Activated CD8-positive, alpha-beta T cell treated with anti-CD3 and anti-CD28 coated beads for 36 hours (primary cell): ENCODE measurements at regions of chr6 and their contacts with region 1.

Region 1: GRCh38 chr6:52419809-52420670 is at the start of gene EFHC1:
- DNase-seq: peak; percentile 99
- ATAC-seq: peak; percentile 94
- H3K4me3 Mint-ChIP-seq: no peak within 1 kb of the TSS
- H3K27ac Mint-ChIP-seq: no peak within 1 kb of the TSS
- H3K4me1 Mint-ChIP-seq: peaks cover 27% of the 10 kb centered on the region
- H3K27me3 Mint-ChIP-seq: no peaks in the 10 kb centered on the region
- CTCF ChIP-seq: no peak
- total RNA-seq, gene EFHC1: 1.9 to 2.1 TPM

Region 2: DNA sequence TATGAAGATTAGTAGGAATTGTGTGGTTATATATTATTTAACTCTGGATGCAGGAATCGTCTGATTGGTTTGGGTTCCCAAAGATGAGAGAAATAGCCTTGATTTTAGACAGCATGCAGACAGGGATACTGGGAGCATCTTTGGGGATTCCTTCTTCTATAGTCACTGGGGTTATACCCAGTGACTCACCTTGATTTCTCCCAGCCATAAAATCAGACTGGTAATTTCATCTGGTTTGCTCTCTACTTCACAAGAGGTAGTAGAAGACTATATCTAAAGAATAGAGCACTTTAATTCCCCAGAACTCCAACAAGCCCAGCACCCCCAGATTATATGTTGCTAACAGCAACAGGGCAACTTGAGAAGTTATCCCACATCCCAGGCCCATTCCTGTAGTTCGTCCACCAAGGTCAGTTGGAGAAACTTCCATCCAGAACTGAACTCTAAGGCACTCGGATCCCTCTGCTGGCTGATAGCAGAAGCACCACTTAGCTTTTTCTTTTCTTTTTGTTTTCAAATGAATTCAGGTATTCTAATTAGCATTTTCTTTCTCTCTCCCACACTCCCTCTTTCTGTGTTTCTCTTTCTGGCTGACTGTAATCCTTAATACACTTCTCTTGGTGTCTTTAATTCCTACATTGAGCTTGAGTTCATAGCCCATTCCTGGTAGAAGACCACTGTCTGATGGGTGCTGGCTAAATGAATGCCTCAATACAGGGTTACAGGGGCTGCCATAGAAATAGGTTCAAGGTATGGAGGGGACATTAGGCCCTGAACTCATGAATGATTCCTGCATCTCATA is 20.3 kb before region 1 on chr6:
- CTCF ChIA-PET with region 1: interaction called, 16 read pairs
- POLR2A ChIA-PET with region 1: interaction called, 4 read pairs
- intact Hi-C with region 1: no loop called
- DNase-seq: peak; percentile 57
- ATAC-seq: peak; percentile 51
- H3K4me3 Mint-ChIP-seq: no peak overlapping the region
- H3K27ac Mint-ChIP-seq: peak overlapping the region; percentile 78
- H3K4me1 Mint-ChIP-seq: peaks cover 65% of the 10 kb centered on the region
- H3K27me3 Mint-ChIP-seq: no peaks in the 10 kb centered on the region
- CTCF ChIP-seq: peak; percentile 91

Region 3: GRCh38 chr6:52557389-52558265 is 137.6 kb after region 1 on chr6:
- CTCF ChIA-PET with region 1: no interaction called
- POLR2A ChIA-PET with region 1: no interaction called
- intact Hi-C with region 1: no loop called
- DNase-seq: no peak
- ATAC-seq: no peak
- H3K4me3 Mint-ChIP-seq: no peak overlapping the region
- H3K27ac Mint-ChIP-seq: no peak overlapping the region
- H3K4me1 Mint-ChIP-seq: peaks cover 2% of the 10 kb centered on the region
- H3K27me3 Mint-ChIP-seq: no peaks in the 10 kb centered on the region
- CTCF ChIP-seq: no peak

Region 4: GRCh38 chr6:52577022-52577777 is 157.2 kb after region 1 on chr6 and contains the start of gene TRAM2:
- CTCF ChIA-PET with region 1: interaction called, 5 read pairs
- POLR2A ChIA-PET with region 1: interaction called, 6 read pairs
- intact Hi-C with region 1: loop called (anchors 5 kb)
- DNase-seq: peak; percentile 61
- ATAC-seq: peak; percentile 60
- H3K4me3 Mint-ChIP-seq: peak within 1 kb of the TSS; percentile 78
- H3K27ac Mint-ChIP-seq: peak within 1 kb of the TSS; percentile 73
- H3K4me1 Mint-ChIP-seq: peaks cover 31% of the 10 kb centered on the region
- H3K27me3 Mint-ChIP-seq: no peaks in the 10 kb centered on the region
- CTCF ChIP-seq: no peak
- total RNA-seq, gene TRAM2: 0.94 to 1.0 TPM

Region 5: GRCh38 chr6:52598123-52598823 is 178.2 kb after region 1 on chr6:
- CTCF ChIA-PET with region 1: interaction called, 19 read pairs
- POLR2A ChIA-PET with region 1: no interaction called
- intact Hi-C with region 1: loop called (anchors 5 kb)
- DNase-seq: peak; percentile 64
- ATAC-seq: peak; percentile 76
- H3K4me3 Mint-ChIP-seq: no peak overlapping the region
- H3K27ac Mint-ChIP-seq: no peak overlapping the region
- H3K4me1 Mint-ChIP-seq: peaks cover 7% of the 10 kb centered on the region
- H3K27me3 Mint-ChIP-seq: no peaks in the 10 kb centered on the region
- CTCF ChIP-seq: peak; percentile 70

Region 6: GRCh38 chr6:52664186-52664990 is 244.3 kb after region 1 on chr6:
- CTCF ChIA-PET with region 1: interaction called, 19 read pairs
- POLR2A ChIA-PET with region 1: interaction called, 8 read pairs
- intact Hi-C with region 1: loop called (anchors 2 kb)
- DNase-seq: peak; percentile 86
- ATAC-seq: peak; percentile 97
- H3K4me3 Mint-ChIP-seq: no peak overlapping the region
- H3K27ac Mint-ChIP-seq: no peak overlapping the region
- H3K4me1 Mint-ChIP-seq: no peaks in the 10 kb centered on the region
- H3K27me3 Mint-ChIP-seq: no peaks in the 10 kb centered on the region
- CTCF ChIP-seq: no peak